HCT116 (cell line): ENCODE measurements at regions of chr18 and their contacts with region 1.

Region 1: DNA sequence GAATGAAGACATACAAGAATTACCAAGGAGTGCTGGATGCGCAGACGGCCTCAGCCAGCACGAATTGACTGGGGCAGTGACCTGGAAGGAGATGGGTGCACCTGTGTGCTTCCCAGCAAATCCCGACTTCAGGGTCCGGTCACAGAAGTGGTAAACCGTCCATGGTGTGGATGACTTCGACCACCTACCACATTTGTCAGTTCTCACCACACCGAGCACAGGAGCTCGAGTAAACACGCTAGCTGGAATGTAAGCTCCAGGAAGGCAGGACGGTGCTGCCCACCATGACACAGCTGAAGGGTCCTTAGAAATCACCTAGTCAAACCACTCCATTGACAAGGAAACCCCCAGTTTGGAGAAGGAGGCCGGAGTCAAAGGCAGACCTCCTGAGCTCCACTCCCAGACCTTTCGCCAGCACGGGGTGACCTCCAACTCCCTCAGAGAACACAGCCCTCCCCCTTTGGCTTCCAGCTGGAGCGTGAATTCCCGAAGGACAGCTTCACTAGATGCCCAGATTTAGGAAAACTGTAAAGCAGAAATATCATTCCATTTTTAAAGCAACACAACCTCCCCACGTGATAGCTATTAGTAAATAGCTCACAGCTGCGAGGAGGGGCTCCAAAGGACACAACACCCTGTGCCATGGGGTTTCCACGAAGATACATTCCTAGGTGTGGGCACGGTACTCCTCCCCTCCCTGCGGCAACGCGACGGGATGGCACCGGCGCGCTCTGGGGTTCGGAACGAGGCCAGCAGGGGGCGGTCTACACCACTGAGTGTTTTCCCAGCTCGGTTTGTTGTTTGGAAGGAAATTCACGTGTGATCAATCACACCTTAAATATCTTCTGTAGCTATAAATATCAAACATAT is 34.1 kb upstream of the GNAL start:
- DNase-seq: peak; percentile 27
- ATAC-seq: peak; percentile 99
- H3K4me3 ChIP-seq: no peak overlapping the region
- H3K27ac ChIP-seq: no peak overlapping the region
- H3K4me1 ChIP-seq: peaks cover 0 to 4% of the 10 kb centered on the region in 2 experiments; a peak in 2 of 4 replicates
- H3K27me3 ChIP-seq: 0 out of 2 replicates have a peak, but pooled peaks cover 6% of the 10 kb centered on the region
- CTCF ChIP-seq: peak; percentile 78 to 97 (median 89)
- POLR2A ChIP-seq: no peak
- RAD21 ChIP-seq: peak; percentile 88

Region 2: GRCh38 chr18:11502368-11502767 is 152.6 kb before region 1 on chr18:
- CTCF ChIA-PET with region 1: no interaction called
- POLR2A ChIA-PET with region 1: no interaction called
- RAD21 ChIA-PET with region 1: no interaction called
- intact Hi-C with region 1: no loop called
- DNase-seq: no peak
- ATAC-seq: no peak
- H3K4me3 ChIP-seq: no peak overlapping the region
- H3K27ac ChIP-seq: no peak overlapping the region
- H3K4me1 ChIP-seq: peaks cover 14 to 24% of the 10 kb centered on the region in 2 experiments
- H3K27me3 ChIP-seq: peaks cover 28% of the 10 kb centered on the region
- CTCF ChIP-seq: no peak
- POLR2A ChIP-seq: no peak
- RAD21 ChIP-seq: no peak

Region 3: DNA sequence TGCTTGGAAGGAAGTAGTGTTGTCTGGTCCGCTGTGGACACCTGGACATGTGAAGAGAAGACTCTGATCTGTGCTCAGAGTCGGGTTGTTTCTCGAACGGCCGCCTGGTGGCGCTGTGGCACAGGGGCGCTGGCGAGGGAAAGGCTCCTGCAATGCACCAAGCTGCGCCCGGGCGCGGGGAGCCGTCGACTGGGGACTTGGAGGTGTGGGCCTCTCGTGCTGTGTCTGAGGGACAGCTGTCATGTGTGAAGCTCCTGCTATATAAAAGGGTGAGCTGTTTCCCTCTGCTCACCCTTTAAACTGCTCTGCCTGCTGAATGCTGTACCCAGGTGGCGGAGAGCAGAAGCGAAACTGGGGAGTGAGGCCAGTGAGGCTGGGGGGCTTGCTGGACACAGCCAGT is 78.1 kb after region 1 on chr18:
- CTCF ChIA-PET with region 1: interaction called, 65 read pairs
- POLR2A ChIA-PET with region 1: interaction called, 3 read pairs
- RAD21 ChIA-PET with region 1: interaction called, 3 to 14 read pairs
- intact Hi-C with region 1: loop called (anchors 1 kb)
- DNase-seq: peak; percentile 48
- ATAC-seq: peak; percentile 98
- H3K4me3 ChIP-seq: peak overlapping the region; percentile 23 to 45
- H3K27ac ChIP-seq: no peak overlapping the region
- H3K4me1 ChIP-seq: peaks cover 2 to 4% of the 10 kb centered on the region in 2 experiments; a peak in 2 of 4 replicates
- H3K27me3 ChIP-seq: peaks cover 17% of the 10 kb centered on the region
- CTCF ChIP-seq: peak; percentile 80 to 97 (median 90)
- POLR2A ChIP-seq: no peak
- RAD21 ChIP-seq: peak; percentile 91

Region 4: DNA sequence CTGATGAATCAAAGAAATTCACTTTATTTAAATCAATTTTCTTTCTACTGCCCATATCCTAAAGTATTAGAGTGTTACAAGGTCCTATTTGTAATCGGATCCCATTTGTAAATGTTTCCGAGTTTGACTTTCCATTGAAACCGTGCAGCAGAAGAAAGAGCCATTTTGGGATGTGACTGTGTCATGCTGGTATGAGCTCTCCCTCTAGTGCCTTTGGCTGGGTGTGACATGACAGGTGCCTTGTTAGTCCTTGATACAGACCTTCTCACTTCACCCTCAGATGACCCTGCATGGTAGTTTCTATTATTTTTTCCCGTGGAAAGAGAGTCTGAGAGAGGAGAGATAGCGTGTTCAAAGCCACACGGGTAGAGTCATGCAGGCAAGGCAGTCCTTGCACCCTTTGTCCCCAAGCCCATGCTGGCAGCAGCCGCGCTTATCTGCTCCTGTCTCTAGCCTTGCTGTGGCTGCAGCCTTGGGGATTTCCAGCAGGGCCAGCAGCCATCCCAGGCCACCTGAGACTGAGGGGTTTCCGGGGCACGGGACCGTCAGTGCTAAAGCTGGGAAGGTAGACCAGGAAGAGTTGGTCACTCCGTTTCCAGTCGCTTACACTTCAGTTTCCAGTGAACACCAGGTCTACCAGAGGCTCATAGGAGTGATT is 217.6 kb after region 1 on chr18:
- CTCF ChIA-PET with region 1: interaction called, 4 read pairs
- POLR2A ChIA-PET with region 1: no interaction called
- RAD21 ChIA-PET with region 1: no interaction called
- intact Hi-C with region 1: loop called (anchors 1 kb)
- DNase-seq: peak; percentile 36
- ATAC-seq: peak; percentile 94
- H3K4me3 ChIP-seq: no peak overlapping the region
- H3K27ac ChIP-seq: no peak overlapping the region
- H3K4me1 ChIP-seq: peaks cover 0 to 4% of the 10 kb centered on the region in 2 experiments; a peak in 1 of 4 replicates
- H3K27me3 ChIP-seq: no peaks in the 10 kb centered on the region
- CTCF ChIP-seq: peak; percentile 58 to 69 (median 62)
- POLR2A ChIP-seq: no peak
- RAD21 ChIP-seq: peak; percentile 88

Region 5: GRCh38 chr18:12038639-12039417 is 383.9 kb after region 1 on chr18:
- CTCF ChIA-PET with region 1: interaction called, 36 read pairs
- POLR2A ChIA-PET with region 1: no interaction called
- RAD21 ChIA-PET with region 1: interaction called in 1 of 2 experiments, 5 read pairs
- intact Hi-C with region 1: loop called (anchors 10 kb)
- DNase-seq: peak; percentile 78
- ATAC-seq: peak; percentile 100
- H3K4me3 ChIP-seq: peak overlapping the region; percentile 30 to 49
- H3K27ac ChIP-seq: no peak overlapping the region; the same call in 1 of the 2 replicates
- H3K4me1 ChIP-seq: peaks cover 0 to 12% of the 10 kb centered on the region in 2 experiments; a peak in 2 of 4 replicates
- H3K27me3 ChIP-seq: no peaks in the 10 kb centered on the region
- CTCF ChIP-seq: peak; percentile 87 to 94 (median 91)
- POLR2A ChIP-seq: no peak
- RAD21 ChIP-seq: peak; percentile 96